ENCODE measurements at regions of chr5 and their contacts with region 1.

Region 1: GRCh38 chr5:102681407-102681983 is 73.6 kb upstream of the PAM start:
- DNase-seq: peak; percentile 70
- H3K4me3 Mint-ChIP-seq: no peak overlapping the region
- H3K27ac Mint-ChIP-seq: no peak overlapping the region
- H3K4me1 Mint-ChIP-seq: no peaks in the 10 kb centered on the region
- H3K27me3 Mint-ChIP-seq: no peaks in the 10 kb centered on the region

Region 2: GRCh38 chr5:102782311-102782770 is 100.8 kb after region 1 on chr5:
- CTCF ChIA-PET with region 1: interaction called, 12 read pairs
- DNase-seq: no peak
- H3K4me3 Mint-ChIP-seq: no peak overlapping the region
- H3K27ac Mint-ChIP-seq: no peak overlapping the region
- H3K4me1 Mint-ChIP-seq: peaks cover 14% of the 10 kb centered on the region
- H3K27me3 Mint-ChIP-seq: no peaks in the 10 kb centered on the region

Region 3: DNA sequence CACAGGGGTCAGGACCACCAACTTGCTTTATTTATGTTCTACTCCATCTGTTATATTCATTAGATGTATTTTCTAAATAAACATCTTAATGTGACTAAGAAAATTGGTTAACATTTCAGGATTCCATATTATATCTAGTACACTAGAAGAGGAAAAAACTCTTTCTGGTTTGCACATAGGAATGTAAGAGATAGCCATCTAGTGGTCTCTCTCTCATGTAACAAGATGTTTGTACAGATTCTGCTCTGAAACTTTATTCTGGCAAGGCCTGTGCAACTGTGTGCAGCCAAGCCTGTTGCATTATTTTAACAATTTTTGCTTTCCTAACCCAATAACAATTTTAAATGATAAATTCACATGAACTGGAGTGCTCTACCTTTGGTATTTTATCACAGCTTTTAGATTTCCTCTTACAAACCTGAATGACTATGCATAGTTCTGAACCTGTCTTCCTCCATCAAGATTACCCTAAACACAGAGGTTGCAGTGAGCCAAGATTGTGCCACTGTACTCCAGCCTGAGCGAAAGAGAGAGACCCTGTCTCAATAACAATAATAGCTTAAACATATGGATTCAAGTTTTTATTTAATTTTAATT is 290.3 kb after region 1 on chr5:
- CTCF ChIA-PET with region 1: interaction called, 11 read pairs
- DNase-seq: no peak
- H3K4me3 Mint-ChIP-seq: no peak overlapping the region
- H3K27ac Mint-ChIP-seq: no peak overlapping the region
- H3K4me1 Mint-ChIP-seq: no peaks in the 10 kb centered on the region
- H3K27me3 Mint-ChIP-seq: no peaks in the 10 kb centered on the region

Region 4: DNA sequence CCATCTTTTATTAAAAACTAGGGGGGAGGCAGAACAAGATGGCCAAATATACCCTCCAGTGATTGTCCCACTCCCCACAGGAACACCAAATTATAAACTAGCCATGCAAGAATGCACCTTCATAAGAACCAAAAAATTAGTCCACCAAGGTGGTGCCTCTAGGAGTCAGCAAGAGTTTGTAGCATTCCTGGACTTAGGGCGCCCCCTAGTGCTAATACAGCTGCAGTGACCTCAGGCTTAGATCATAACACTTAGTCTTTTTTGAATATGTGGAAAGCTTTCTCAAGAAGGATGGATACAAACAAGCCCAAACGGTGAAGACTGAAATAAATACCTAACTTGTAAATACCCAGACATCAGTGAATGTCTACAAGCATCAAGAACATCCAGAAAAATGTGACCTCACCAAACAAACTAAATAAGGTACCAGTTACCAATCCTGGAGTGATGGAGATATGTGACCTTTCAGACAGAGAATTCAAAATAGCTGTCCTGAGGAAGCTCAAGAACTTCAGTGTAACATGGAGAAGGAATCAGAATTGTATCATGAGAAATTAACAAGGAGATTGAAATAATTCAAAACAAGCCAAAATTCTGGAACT is 457.9 kb after region 1 on chr5:
- CTCF ChIA-PET with region 1: interaction called, 21 read pairs
- DNase-seq: peak; percentile 88
- H3K4me3 Mint-ChIP-seq: no peak overlapping the region
- H3K27ac Mint-ChIP-seq: no peak overlapping the region
- H3K4me1 Mint-ChIP-seq: no peaks in the 10 kb centered on the region
- H3K27me3 Mint-ChIP-seq: no peaks in the 10 kb centered on the region

Measured in activated naive CD4-positive, alpha-beta T cell treated with anti-CD3 and anti-CD28 coated beads, Interleukin-2, amount 10 ng/mL, durations not matched to agents 7 days and 5 days (primary cell).